ENCODE measurements at regions of chr7 and their contacts with region 1.

Region 1: DNA sequence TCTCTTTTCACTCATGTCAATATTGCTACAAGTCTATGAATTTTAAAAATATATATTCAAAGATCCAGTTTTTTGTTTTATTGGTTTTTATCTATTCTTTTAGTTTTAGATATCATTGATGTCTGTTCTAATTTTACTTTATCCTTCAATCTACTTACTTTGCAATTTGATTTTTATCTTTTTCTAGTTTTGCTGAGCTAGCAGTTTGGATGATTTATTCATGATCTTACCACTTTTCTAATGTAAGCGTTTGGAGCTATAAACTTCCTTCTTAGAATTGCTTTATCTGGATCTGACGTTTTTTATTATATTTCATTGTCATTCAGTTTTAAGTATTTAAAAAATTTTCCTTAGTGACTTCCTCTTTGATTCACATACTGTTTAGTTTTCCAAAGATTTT is 664.5 kb upstream of the VSTM2A start:
- DNase-seq: no peak
- ATAC-seq: no peak
- H3K4me3 ChIP-seq: no peak overlapping the region
- H3K4me3 Mint-ChIP-seq: no peak overlapping the region
- H3K27ac ChIP-seq: no peak overlapping the region
- H3K27ac Mint-ChIP-seq: no peak overlapping the region
- H3K4me1 ChIP-seq: no peaks in the 10 kb centered on the region
- H3K4me1 Mint-ChIP-seq: no peaks in the 10 kb centered on the region
- H3K27me3 ChIP-seq: no peaks in the 10 kb centered on the region
- H3K27me3 Mint-ChIP-seq: no peaks in the 10 kb centered on the region

Region 2: GRCh38 chr7:54546081-54546985 is 668.6 kb after region 1 on chr7:
- CTCF ChIA-PET with region 1: no interaction called
- POLR2A ChIA-PET with region 1: no interaction called
- intact Hi-C with region 1: loop called in 1 of 2 experiments (anchors 5 kb)
- DNase-seq: no peak
- ATAC-seq: no peak
- H3K4me3 ChIP-seq: no peak overlapping the region
- H3K4me3 Mint-ChIP-seq: no peak overlapping the region
- H3K27ac ChIP-seq: no peak overlapping the region
- H3K27ac Mint-ChIP-seq: no peak overlapping the region
- H3K4me1 ChIP-seq: no peaks in the 10 kb centered on the region
- H3K4me1 Mint-ChIP-seq: peaks cover 0 to 7% (median 4%) of the 10 kb centered on the region in 7 donors
- H3K27me3 ChIP-seq: peaks cover 0 to 5% of the 10 kb centered on the region in 2 donors
- H3K27me3 Mint-ChIP-seq: peaks cover 32 to 48% (median 34%) of the 10 kb centered on the region in 5 donors